PC-9 (cell line): ENCODE measurements at regions of chr7 and their contacts with region 1.

Region 1: DNA sequence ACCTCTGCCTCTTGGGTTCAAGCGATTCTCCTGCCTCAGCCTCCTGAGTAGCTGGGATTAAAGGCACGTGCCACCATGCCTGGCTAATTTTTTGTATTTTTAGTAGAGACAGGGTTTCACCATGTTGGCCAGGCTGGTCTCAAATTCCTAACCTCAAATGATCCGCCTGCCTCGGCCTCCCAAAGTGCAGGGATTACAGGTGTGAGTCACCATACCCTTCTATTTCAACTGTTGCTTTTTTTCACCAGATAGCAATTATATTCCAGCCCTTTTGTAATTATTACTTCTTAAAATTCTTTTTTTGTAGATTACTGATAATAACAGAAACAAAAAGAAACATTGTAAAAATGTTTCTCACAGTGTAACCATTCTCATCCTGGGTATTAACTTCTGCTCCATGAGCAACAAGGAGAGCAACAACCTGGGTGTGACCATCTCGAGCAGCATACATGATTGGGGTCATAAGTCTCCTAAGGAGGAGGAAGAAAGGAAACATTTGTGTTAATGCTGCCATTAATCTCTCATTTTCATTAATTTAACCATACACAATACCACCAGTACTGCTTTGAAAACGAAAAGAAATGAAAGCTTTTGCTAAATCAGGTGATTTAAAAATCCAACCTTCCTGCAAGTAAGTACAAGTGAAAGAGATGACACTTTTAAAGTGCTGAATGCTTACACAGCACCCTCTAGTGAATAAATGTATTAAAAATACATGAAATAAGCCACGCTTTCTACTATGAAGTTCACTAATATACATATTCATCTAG is 41.8 kb downstream of the ASZ1 start:
- DNase-seq: no peak
- H3K4me3 ChIP-seq: no peak overlapping the region
- H3K27ac ChIP-seq: no peak overlapping the region
- H3K4me1 ChIP-seq: no peaks in the 10 kb centered on the region; the same call in 1 of the 2 replicates
- H3K27me3 ChIP-seq: no peaks in the 10 kb centered on the region
- CTCF ChIP-seq: peak; percentile 60

Region 2: GRCh38 chr7:116173051-116174028 is 1212.2 kb before region 1 on chr7:
- CTCF ChIA-PET with region 1: interaction called, 3 read pairs
- POLR2A ChIA-PET with region 1: no interaction called
- intact Hi-C with region 1: loop called (anchors 5 kb)
- DNase-seq: peak; percentile 26 to 48
- H3K4me3 ChIP-seq: no peak overlapping the region
- H3K27ac ChIP-seq: no peak overlapping the region
- H3K4me1 ChIP-seq: peaks cover 11% of the 10 kb centered on the region; the same call in 1 of the 2 replicates
- H3K27me3 ChIP-seq: no peaks in the 10 kb centered on the region
- CTCF ChIP-seq: peak; percentile 84

Region 3: DNA sequence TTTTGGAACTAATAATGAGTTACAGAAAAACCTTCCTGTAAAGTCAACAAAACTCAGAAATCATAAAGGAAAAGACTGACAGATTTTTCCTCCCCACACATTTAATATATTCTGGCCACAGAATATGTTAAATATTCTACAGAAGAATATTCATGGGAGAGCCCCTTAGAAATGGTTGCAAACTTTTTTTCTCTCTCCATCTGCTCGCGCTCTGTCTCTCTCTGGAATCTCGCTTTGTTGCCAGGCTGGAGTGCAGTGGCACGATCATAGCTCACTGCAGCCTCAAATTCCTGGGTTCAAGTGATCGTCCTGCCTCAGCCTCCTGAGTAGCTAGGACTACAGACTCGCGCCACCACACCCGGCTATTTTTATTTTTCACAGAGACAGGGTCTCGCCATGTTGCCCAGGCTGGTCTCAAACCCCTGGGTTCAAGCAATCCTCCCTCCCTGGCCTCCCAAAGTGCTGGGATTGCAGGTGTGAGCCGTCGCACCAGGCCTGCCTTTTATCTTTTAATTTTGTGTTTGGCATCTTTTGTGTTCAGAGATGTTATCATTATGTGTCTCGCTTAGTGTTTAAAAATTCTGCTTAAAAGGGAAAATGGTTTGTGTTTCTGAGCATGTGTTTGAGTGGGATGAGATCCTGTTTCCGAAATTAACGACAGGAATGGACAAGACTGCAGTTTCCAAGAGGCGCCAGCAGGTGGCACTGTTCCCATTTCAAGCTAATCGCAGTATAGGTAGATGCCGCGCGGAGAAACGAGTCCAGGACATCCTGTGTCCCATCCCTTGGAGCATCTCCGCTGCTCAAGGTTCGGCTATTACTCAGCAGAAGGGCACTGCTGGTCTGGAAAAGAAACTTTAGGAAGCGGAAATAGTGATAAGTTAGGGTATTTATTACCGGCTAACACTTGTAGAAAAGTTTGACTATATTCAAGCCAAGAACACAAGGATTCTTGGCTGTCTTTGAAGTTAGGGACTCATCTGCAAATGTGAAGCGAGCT is 455.3 kb before region 1 on chr7:
- CTCF ChIA-PET with region 1: no interaction called
- POLR2A ChIA-PET with region 1: no interaction called
- intact Hi-C with region 1: loop called (anchors 1 kb)
- DNase-seq: peak; percentile 51 to 75
- H3K4me3 ChIP-seq: no peak overlapping the region
- H3K27ac ChIP-seq: no peak overlapping the region
- H3K4me1 ChIP-seq: no peaks in the 10 kb centered on the region
- H3K27me3 ChIP-seq: no peaks in the 10 kb centered on the region
- CTCF ChIP-seq: peak; percentile 95

Region 4: GRCh38 chr7:117127585-117128168 is 257.8 kb before region 1 on chr7:
- CTCF ChIA-PET with region 1: no interaction called
- POLR2A ChIA-PET with region 1: no interaction called
- intact Hi-C with region 1: loop called (anchors 5 kb)
- DNase-seq: peak; percentile 18 to 49
- H3K4me3 ChIP-seq: no peak overlapping the region
- H3K27ac ChIP-seq: no peak overlapping the region
- H3K4me1 ChIP-seq: peaks cover 32% of the 10 kb centered on the region
- H3K27me3 ChIP-seq: no peaks in the 10 kb centered on the region
- CTCF ChIP-seq: peak; percentile 83

Region 5: DNA sequence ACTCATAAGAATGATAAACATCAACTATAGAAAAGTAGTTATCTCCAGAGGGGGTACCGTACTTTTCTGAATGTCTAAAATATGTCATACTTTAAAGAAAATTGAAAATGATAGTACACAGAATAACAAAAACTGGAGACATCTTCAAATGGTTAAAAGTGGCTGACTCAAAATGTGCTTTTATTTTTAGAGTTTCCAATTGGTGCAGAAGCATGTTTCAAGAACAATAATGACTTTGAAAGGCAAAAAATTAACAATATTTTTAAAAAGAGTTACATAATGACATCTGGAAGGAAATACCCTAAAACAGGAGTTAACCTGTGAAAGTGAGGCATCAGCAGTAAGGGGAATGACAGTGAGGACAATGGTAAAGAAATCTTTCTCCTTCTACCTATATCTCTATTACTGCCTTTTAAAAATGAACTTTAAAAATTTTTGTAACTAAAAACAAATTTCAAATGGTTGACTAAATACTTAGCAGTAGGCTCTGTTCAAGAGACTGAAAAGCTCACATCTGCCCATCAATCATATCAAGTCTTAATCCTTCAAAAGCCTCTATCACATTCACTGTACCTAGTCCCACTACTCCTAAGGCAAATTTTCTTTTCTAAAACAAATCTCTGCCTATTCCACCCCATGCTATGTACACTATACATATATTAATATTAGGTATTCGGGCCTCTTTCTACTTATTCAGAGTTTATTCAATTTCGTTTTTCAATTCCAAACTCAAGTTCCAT is 38.7 kb after region 1 on chr7:
- CTCF ChIA-PET with region 1: no interaction called
- POLR2A ChIA-PET with region 1: no interaction called
- intact Hi-C with region 1: no loop called
- DNase-seq: no peak
- H3K4me3 ChIP-seq: no peak overlapping the region
- H3K27ac ChIP-seq: no peak overlapping the region
- H3K4me1 ChIP-seq: no peaks in the 10 kb centered on the region
- H3K27me3 ChIP-seq: no peaks in the 10 kb centered on the region
- CTCF ChIP-seq: no peak